Psoas muscle (tissue), 8 donors: ENCODE measurements at regions of chr17 and their contacts with region 1.

Region 1: GRCh38 chr17:14622615-14623101 is 321.8 kb downstream of the HS3ST3B1 start:
- DNase-seq: no peak
- ATAC-seq: no peak
- H3K4me3 ChIP-seq: no peak overlapping the region
- H3K27ac ChIP-seq: no peak overlapping the region
- H3K4me1 ChIP-seq: no peaks in the 10 kb centered on the region
- H3K27me3 ChIP-seq: no peaks in the 10 kb centered on the region
- CTCF ChIP-seq: no peak

Region 2: GRCh38 chr17:14559264-14560119 is 63.2 kb before region 1 on chr17:
- intact Hi-C with region 1: loop called in 1 of 2 experiments (anchors 10 kb)
- DNase-seq: no peak
- ATAC-seq: no peak
- H3K4me3 ChIP-seq: no peak overlapping the region
- H3K27ac ChIP-seq: no peak overlapping the region
- H3K4me1 ChIP-seq: no peaks in the 10 kb centered on the region
- H3K27me3 ChIP-seq: no peaks in the 10 kb centered on the region
- CTCF ChIP-seq: no peak